ENCODE measurements at regions of chr10 and their contacts with region 1.

Region 1: DNA sequence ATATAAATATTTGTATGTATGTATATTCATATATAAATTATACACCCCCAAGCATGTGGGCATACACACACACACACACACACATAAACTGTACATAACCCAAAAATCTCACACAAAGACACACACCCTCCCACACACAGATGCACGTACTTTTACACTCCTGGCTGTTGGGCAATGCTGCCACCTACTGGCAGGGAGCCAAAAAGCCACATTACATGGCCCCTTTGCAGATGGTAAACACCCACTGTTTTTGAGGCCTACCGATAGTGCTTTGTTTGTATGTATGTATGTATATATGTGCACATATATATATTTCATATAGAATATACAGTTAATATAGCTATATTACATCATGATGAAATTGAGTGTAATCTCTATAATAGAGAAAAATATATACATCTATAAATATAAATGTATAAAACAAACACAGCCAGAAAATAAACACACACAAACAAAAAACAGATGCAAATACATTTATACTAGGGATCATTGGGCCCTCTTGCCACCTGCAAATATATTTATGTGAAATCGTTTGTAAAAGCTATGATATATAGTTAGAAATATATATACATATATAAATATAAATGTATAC is 120.1 kb upstream of the ACBD5 start:
- DNase-seq: peak; percentile 62
- CTCF ChIP-seq: peak; percentile 96

Region 2: GRCh38 chr10:26890956-26891355 is 469.7 kb before region 1 on chr10:
- in situ Hi-C with region 1: loop called (anchors 5 kb)
- DNase-seq: peak; percentile 26
- CTCF ChIP-seq: peak; percentile 71

Region 3: DNA sequence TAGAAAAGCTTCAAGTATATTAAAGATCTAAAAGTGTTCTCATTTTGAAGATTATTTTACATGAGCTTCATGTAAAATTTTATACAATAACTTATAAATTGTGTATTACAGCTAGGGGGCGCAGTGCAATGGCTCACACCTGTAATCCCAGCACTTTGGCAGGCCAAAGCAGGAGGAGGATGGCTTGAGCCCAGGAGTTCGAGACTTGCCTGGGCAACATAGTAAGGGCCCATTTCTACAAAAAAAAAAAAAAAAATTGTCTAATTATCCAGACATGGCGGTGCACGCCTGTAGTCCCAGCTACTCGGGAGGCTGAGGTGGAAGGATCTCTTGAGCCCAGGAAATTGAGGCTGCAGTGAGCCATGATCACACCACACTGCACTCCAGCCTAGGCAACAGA is 136.7 kb before region 1 on chr10:
- in situ Hi-C with region 1: loop called (anchors 10 kb)
- DNase-seq: no peak
- CTCF ChIP-seq: peak; percentile 62

Measured in GM13977 (cell line).